ENCODE measurements at regions of chr19 and their contacts with region 1.

Region 1: GRCh38 chr19:18521885-18522624 is at the start of gene ELL:
- DNase-seq: peak; percentile 100
- ATAC-seq: peak; percentile 85 to 96 (median 85)
- H3K4me3 ChIP-seq: peak within 1 kb of the TSS; percentile 96
- H3K4me3 Mint-ChIP-seq: peak within 1 kb of the TSS; percentile 91
- H3K27ac ChIP-seq: peak within 1 kb of the TSS; percentile 98
- H3K27ac Mint-ChIP-seq: peak within 1 kb of the TSS; percentile 92 to 98
- H3K4me1 ChIP-seq: peaks cover 36% of the 10 kb centered on the region
- H3K4me1 Mint-ChIP-seq: peaks cover 21 to 22% of the 10 kb centered on the region in 2 donors
- H3K27me3 ChIP-seq: no peaks in the 10 kb centered on the region
- H3K27me3 Mint-ChIP-seq: no peaks in the 10 kb centered on the region
- CTCF ChIP-seq: no peak
- total RNA-seq, gene ELL: 61.1 to 64.3 (median 63.8) TPM

Region 2: GRCh38 chr19:18478569-18479311 is 43.3 kb before region 1 on chr19:
- intact Hi-C with region 1: loop called (anchors 1 kb)
- DNase-seq: peak; percentile 43 to 71
- ATAC-seq: peak; percentile 48 to 81 (median 62)
- H3K4me3 ChIP-seq: no peak overlapping the region
- H3K4me3 Mint-ChIP-seq: peak overlapping the region; percentile 82
- H3K27ac ChIP-seq: peak overlapping the region; percentile 77
- H3K27ac Mint-ChIP-seq: peak overlapping the region; percentile 93 to 99
- H3K4me1 ChIP-seq: peaks cover 87% of the 10 kb centered on the region
- H3K4me1 Mint-ChIP-seq: peaks cover 68 to 90% of the 10 kb centered on the region in 2 donors
- H3K27me3 ChIP-seq: no peaks in the 10 kb centered on the region
- H3K27me3 Mint-ChIP-seq: no peaks in the 10 kb centered on the region
- CTCF ChIP-seq: no peak

Region 3: GRCh38 chr19:18488838-18489626 is 33.0 kb before region 1 on chr19:
- intact Hi-C with region 1: no loop called
- DNase-seq: peak in 1 of 2 donors; percentile 42
- ATAC-seq: no peak
- H3K4me3 ChIP-seq: no peak overlapping the region
- H3K4me3 Mint-ChIP-seq: peak overlapping the region; percentile 31
- H3K27ac ChIP-seq: no peak overlapping the region
- H3K27ac Mint-ChIP-seq: peak overlapping the region; percentile 82 to 86
- H3K4me1 ChIP-seq: peaks cover 95% of the 10 kb centered on the region
- H3K4me1 Mint-ChIP-seq: peaks cover 56 to 65% of the 10 kb centered on the region in 2 donors
- H3K27me3 ChIP-seq: no peaks in the 10 kb centered on the region
- H3K27me3 Mint-ChIP-seq: no peaks in the 10 kb centered on the region
- CTCF ChIP-seq: no peak

Region 4: DNA sequence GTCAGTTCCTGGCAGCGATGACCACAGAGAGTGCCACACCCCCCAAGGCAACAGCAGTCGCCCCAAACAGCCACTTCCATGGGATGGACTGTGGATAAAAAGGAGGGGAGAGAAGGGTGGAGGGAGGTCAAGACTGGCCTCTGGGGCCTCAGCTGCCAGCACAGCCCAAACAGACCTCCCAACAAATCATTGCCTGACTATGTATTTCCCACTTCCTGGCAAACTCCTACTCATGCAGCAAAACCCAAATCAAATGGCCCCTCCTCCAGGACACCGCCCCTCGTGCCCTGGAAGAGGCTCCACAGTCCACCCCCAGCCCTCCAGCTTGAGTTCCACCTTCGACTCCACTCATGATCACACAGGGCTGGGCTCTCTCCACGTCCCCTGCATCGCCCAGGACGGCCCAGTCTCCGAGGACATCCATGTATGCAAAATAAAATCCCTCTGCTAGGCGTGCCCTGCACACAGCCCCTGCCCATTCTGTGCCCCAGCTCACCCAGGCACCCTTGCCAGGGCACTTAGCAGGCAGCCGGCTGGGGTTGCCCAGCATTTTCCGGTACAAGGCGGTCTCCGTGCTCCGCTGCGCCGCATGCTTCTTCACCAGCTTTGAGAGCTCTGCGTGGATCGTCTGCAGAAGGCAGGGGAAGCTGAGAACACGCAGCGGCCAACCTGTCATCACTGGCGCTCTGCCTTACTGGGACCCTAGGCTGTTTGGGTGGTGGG is 10.3 kb after region 1 on chr19:
- intact Hi-C with region 1: no loop called
- DNase-seq: no peak
- ATAC-seq: no peak
- H3K4me3 ChIP-seq: no peak overlapping the region
- H3K4me3 Mint-ChIP-seq: no peak overlapping the region
- H3K27ac ChIP-seq: no peak overlapping the region
- H3K27ac Mint-ChIP-seq: peak overlapping the region in 1 of 2 donors; percentile 66
- H3K4me1 ChIP-seq: no peaks in the 10 kb centered on the region
- H3K4me1 Mint-ChIP-seq: peaks cover 0 to 5% of the 10 kb centered on the region in 2 donors
- H3K27me3 ChIP-seq: no peaks in the 10 kb centered on the region
- H3K27me3 Mint-ChIP-seq: no peaks in the 10 kb centered on the region
- CTCF ChIP-seq: no peak

Region 5: GRCh38 chr19:18557474-18558201 is 35.6 kb after region 1 on chr19 and contains the start of gene KXD1:
- intact Hi-C with region 1: loop called (anchors 1 kb)
- DNase-seq: peak; percentile 95 to 100
- ATAC-seq: peak; percentile 98 to 100 (median 98)
- H3K4me3 ChIP-seq: peak within 1 kb of the TSS; percentile 94
- H3K4me3 Mint-ChIP-seq: peak within 1 kb of the TSS; percentile 88
- H3K27ac ChIP-seq: peak within 1 kb of the TSS; percentile 98
- H3K27ac Mint-ChIP-seq: peak within 1 kb of the TSS; percentile 83 to 91
- H3K4me1 ChIP-seq: peaks cover 21% of the 10 kb centered on the region
- H3K4me1 Mint-ChIP-seq: peaks cover 8 to 21% of the 10 kb centered on the region in 2 donors
- H3K27me3 ChIP-seq: no peaks in the 10 kb centered on the region
- H3K27me3 Mint-ChIP-seq: no peaks in the 10 kb centered on the region
- CTCF ChIP-seq: no peak
- total RNA-seq, gene KXD1: 83.2 to 88.8 (median 86.9) TPM

Region 6: DNA sequence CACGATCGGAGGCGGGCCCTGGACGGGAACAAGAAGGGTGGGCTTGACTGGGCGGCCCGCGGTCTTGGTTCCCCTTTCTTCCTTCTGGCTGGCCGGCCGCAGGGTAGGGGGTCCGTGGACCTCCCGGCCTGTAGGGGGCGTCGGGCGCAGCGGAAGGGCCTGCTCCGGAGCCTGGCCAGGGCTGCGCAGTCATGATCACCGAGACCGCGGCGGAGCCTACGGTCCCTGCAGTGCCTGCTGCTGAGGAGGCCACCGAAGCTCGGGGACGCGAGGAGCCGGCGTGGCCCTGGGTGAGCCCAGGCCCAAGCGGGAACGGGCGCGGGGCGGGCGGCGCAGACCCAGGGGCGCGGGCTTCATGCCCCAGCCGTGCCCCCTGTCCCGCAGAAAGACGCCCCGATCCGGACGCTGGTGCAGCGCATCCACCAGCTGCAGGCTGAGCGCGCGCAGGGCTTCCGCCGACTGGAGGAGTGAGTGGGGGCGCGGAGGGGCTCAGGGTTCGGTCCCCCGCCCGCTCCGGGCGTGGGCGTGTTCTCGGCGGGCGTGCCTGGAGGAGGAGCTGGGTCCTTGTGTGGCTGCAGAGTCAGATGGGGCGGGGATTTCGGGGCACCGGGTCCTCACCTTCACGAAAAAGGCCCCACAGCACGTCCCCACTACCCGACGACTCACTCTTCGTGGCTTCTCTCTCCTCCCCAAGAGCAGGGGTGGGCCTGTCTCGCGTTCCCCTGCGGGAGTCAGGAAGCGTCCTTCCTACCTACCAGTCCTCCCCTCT is 66.7 kb after region 1 on chr19 and contains the start of gene REX1BD:
- intact Hi-C with region 1: loop called (anchors 2 kb)
- DNase-seq: peak; percentile 78 to 93
- ATAC-seq: peak; percentile 79 to 90 (median 80)
- H3K4me3 ChIP-seq: peak within 1 kb of the TSS; percentile 54
- H3K4me3 Mint-ChIP-seq: peak within 1 kb of the TSS; percentile 90
- H3K27ac ChIP-seq: peak within 1 kb of the TSS; percentile 77
- H3K27ac Mint-ChIP-seq: peak within 1 kb of the TSS; percentile 86 to 88
- H3K4me1 ChIP-seq: peaks cover 33% of the 10 kb centered on the region
- H3K4me1 Mint-ChIP-seq: peaks cover 9 to 28% of the 10 kb centered on the region in 2 donors
- H3K27me3 ChIP-seq: no peaks in the 10 kb centered on the region
- H3K27me3 Mint-ChIP-seq: peaks cover 0 to 4% of the 10 kb centered on the region in 2 donors
- CTCF ChIP-seq: peak; percentile 85
- total RNA-seq, gene REX1BD: 80.6 to 86.9 (median 85.3) TPM

Region 7: DNA sequence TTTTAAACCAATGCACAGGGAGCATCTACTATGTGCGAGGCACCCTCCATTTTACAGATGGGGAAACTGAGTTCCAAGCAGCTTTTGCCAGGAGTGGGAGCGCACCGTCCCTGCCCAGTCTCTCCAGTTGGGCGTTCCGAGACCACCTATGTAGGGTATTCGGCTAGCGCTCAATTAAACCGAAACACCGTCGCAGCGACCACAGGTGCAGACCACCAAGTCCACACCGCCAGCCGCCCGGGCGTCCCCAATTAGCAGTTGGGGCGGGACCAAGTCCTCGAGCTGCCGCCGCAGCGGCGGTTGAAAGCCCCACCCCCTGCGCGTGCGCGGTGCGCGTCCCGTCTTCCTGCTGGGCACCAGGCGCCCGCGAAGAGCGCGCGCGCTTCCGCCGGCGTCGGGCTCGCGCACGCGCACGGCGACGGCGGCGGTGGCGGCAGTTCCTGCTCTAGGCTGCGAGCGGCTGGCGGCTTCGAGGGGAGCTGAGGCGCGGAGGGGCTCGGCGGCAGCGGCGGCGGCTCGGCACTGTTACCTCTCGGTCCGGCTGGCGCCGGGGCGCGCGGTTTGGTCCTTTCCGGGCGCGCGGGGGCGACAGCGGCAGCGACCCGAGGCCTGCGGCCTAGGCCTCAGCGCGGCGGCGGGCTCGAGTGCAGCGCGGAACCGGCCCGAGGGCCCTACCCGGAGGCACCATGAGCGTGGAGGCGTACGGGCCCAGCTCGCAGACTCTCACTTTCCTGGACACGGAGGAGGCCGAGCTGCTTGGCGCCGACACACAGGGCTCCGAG is 309.7 kb after region 1 on chr19 and contains the start of gene UPF1:
- intact Hi-C with region 1: loop called (anchors 5 kb)
- DNase-seq: peak; percentile 96 to 98
- ATAC-seq: peak; percentile 81 to 91 (median 88)
- H3K4me3 ChIP-seq: peak within 1 kb of the TSS; percentile 64
- H3K4me3 Mint-ChIP-seq: peak within 1 kb of the TSS; percentile 93
- H3K27ac ChIP-seq: peak within 1 kb of the TSS; percentile 66
- H3K27ac Mint-ChIP-seq: peak within 1 kb of the TSS; percentile 89 to 91
- H3K4me1 ChIP-seq: peaks cover 37% of the 10 kb centered on the region
- H3K4me1 Mint-ChIP-seq: peaks cover 39% of the 10 kb centered on the region in 2 donors
- H3K27me3 ChIP-seq: no peaks in the 10 kb centered on the region
- H3K27me3 Mint-ChIP-seq: peaks cover 3 to 9% of the 10 kb centered on the region in 2 donors
- CTCF ChIP-seq: no peak
- total RNA-seq, gene UPF1: 123 to 140 (median 138) TPM